Posterior vena cava (tissue), 2 donors: ENCODE measurements at regions of chr10 and their contacts with region 1.

Region 1: DNA sequence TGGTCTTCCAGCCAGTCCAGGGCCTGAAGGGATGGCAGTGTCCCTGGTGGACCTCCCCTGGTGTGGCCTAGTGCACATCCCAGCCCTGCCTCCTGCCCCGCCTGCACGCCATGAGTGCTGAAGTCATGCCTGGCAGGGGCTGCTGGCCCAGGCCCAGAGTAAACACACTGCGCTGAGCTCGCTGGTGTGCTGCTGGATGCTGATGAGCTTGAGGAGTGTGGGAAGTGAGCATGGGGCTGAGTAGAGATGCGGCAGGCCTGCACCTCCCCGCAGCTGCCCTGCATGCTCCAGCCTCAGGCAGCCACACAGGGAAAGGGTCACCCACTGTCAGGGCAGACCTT is 43.2 kb downstream of the HTRA1 start:
- DNase-seq: peak; percentile 96

Region 2: DNA sequence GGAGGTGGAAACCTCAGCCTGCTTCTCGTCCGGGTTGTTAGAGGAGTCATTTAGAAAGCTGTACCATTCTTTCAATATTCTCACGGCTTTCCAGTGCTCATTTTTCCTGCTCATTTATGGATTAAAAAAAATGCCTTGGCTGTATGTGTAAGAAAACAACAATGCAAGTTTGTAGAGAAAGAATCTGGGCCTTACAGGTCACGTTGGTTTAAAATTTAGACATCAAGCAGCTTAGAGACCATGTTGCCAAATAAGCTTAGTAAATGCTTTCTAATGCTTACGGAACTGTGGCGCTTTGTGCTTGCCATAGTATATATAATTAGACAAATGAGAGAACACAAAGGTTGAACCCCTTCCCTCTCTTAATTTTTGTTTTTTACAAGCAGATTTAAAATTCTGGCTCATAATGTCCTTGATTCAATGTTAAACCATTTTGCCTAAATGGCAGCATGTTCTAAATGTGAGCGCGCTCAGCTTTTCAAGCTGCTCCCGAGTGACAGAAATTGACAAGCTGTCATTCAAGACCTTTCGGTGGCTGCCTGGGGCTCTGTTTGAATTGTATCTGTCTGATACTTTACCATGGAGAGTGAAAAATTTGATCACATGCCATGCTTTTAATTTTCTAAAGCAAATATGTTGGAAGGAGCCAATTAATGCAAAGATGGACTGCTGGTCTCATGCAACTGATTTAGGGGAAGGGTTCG is 49.1 kb before region 1 on chr10:
- intact Hi-C with region 1: loop called (anchors 1 to 5 kb)
- DNase-seq: no peak